HEK293T (cell line): ENCODE measurements at regions of chr17 and their contacts with region 1.

Region 1: GRCh38 chr17:17972126-17972951 is at the starts of genes DRC3 and TOM1L2:
- DNase-seq: peak; percentile 99

Region 2: GRCh38 chr17:17890773-17891759 is 81.3 kb before region 1 on chr17:
- CTCF ChIA-PET with region 1: interaction called, 10 read pairs
- POLR2A ChIA-PET with region 1: no interaction called
- DNase-seq: peak; percentile 67

Region 3: DNA sequence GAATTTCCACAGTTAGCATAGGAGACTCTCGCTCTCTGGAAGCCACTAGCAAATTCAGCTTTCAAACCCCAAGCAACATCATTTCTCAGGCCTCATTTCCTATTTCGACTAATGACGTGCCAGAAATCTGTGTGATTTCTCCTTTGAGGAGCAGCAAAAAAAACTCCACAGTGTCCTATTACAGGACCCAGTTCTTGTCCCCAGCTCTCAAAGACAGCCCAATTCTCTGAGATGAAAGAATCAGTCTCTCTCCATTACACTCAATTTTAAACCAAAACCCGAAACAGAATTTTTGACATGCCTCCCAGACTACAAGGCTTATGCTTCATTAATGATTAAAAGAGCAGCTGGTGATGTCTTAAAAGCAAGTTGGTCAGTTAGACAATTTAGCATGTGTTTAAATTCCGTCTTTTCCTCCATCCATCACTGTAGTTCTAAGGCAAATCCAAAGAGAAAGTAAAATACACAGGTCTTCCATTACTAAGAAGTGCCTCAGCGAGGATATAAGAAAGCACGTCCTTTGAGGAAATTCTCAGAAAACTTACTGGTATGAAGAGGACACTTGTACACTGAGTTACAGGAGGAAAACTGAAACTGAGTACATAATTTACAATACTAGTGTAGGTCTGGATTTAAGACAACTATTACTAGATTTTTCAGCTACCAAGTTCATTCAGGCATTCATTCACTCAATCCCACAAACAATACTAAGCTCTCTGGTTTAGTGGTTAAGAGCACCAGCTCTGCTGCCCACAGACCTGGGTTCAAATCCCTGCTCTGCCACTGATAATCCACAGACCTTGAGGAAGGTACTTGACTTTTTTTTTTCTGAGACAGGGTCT is 12.6 kb before region 1 on chr17:
- CTCF ChIA-PET with region 1: interaction called, 3 read pairs
- POLR2A ChIA-PET with region 1: interaction called, 14 read pairs
- DNase-seq: no peak

Region 4: GRCh38 chr17:17985555-17985954 is 13.2 kb after region 1 on chr17:
- CTCF ChIA-PET with region 1: no interaction called
- POLR2A ChIA-PET with region 1: interaction called, 16 read pairs
- DNase-seq: no peak

Region 5: GRCh38 chr17:18017958-18018357 is 45.6 kb after region 1 on chr17:
- CTCF ChIA-PET with region 1: no interaction called
- POLR2A ChIA-PET with region 1: no interaction called
- DNase-seq: no peak